Mammary epithelial cell (primary cell): ENCODE measurements at regions of chr12 and their contacts with region 1.

Region 1: GRCh38 chr12:94980577-94980976 is 22.9 kb downstream of the NDUFA12 start:
- DNase-seq: no peak
- H3K4me3 ChIP-seq: no peak overlapping the region
- H3K27ac ChIP-seq: no peak overlapping the region
- H3K4me1 ChIP-seq: peaks cover 13% of the 10 kb centered on the region
- H3K27me3 ChIP-seq: no peaks in the 10 kb centered on the region
- CTCF ChIP-seq: peak; percentile 1 to 10

Region 2: DNA sequence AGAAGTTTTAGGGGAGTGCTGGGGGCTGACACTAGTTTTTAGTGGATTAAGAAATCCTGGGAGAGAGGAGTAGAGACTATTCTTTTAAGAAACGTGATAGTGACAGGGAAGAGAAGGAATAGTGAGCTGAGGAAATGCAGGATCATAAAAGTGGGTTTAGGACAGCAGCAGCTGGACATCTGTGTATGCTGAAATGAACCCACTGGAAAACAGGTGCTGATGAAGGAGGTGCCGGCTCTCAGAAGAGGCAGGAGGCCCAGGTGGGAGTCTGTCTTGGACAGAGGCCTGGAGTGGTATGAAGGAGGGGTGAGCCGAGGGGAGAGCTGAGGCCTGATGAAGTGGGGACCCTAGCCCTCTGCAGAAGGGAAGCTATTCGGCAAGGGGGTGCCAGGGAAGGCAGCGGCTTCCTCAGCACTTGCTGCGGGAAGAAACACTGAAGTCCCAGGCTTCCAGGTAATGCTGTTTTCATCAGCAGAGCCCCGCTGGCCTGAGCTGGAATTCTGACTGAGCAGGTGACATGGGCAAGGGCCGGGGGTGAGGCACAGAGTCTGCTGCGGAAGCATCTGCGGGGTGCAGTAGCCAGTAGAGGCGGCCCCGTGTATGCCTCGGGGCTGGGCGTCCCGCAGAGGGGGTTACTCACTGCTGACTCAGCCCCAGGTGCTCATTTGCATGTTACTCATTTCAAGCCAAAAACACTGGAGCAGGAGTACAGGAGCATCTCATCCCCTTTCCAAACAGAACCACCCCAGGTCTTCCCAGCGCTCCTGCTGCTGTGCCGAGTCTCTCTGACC is 420.0 kb before region 1 on chr12:
- CTCF ChIA-PET with region 1: no interaction called
- dilution Hi-C with region 1: no loop called
- in situ Hi-C with region 1: no loop called
- intact Hi-C with region 1: loop called (anchors 5 kb)
- DNase-seq: peak; percentile 98
- H3K4me3 ChIP-seq: peak overlapping the region in 2 of 3 experiments; percentile 20 to 35
- H3K27ac ChIP-seq: peak overlapping the region; percentile 95
- H3K4me1 ChIP-seq: peaks cover 34% of the 10 kb centered on the region
- H3K27me3 ChIP-seq: no peaks in the 10 kb centered on the region
- CTCF ChIP-seq: no peak

Region 3: GRCh38 chr12:94649349-94650142 is 331.0 kb before region 1 on chr12:
- CTCF ChIA-PET with region 1: no interaction called
- dilution Hi-C with region 1: no loop called
- in situ Hi-C with region 1: no loop called
- intact Hi-C with region 1: loop called (anchors 10 kb)
- DNase-seq: peak; percentile 51
- H3K4me3 ChIP-seq: peak overlapping the region; percentile 73 to 92 (median 82)
- H3K27ac ChIP-seq: peak overlapping the region; percentile 63
- H3K4me1 ChIP-seq: peaks cover 27% of the 10 kb centered on the region
- H3K27me3 ChIP-seq: no peaks in the 10 kb centered on the region
- CTCF ChIP-seq: peak; percentile 19 to 53

Region 4: DNA sequence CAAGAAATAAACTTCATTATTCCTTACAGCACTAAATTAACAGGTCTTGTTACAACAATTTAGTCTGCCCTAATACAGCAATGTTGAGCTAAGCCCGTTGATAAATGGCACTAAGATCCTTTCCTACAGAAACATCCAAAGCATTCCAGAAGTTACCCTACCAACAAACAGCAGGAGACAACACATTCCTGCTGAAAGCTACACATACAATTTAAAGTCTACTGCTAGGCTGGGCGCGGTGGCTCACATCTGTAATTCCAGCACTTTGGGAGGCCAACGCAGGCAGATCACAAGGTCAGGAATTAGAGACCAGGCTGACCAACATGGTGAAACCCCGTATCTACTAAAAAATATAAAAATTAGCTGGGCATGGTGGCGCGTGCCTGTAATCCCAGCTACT is 45.9 kb before region 1 on chr12:
- CTCF ChIA-PET with region 1: no interaction called
- dilution Hi-C with region 1: no loop called
- in situ Hi-C with region 1: no loop called
- intact Hi-C with region 1: no loop called
- DNase-seq: no peak
- H3K4me3 ChIP-seq: no peak overlapping the region
- H3K27ac ChIP-seq: no peak overlapping the region
- H3K4me1 ChIP-seq: no peaks in the 10 kb centered on the region
- H3K27me3 ChIP-seq: no peaks in the 10 kb centered on the region
- CTCF ChIP-seq: no peak

Region 5: GRCh38 chr12:94962670-94963069 is 17.9 kb before region 1 on chr12:
- CTCF ChIA-PET with region 1: no interaction called
- dilution Hi-C with region 1: no loop called
- in situ Hi-C with region 1: no loop called
- intact Hi-C with region 1: no loop called
- DNase-seq: no peak
- H3K4me3 ChIP-seq: no peak overlapping the region
- H3K27ac ChIP-seq: no peak overlapping the region
- H3K4me1 ChIP-seq: no peaks in the 10 kb centered on the region
- H3K27me3 ChIP-seq: no peaks in the 10 kb centered on the region
- CTCF ChIP-seq: no peak

Region 6: DNA sequence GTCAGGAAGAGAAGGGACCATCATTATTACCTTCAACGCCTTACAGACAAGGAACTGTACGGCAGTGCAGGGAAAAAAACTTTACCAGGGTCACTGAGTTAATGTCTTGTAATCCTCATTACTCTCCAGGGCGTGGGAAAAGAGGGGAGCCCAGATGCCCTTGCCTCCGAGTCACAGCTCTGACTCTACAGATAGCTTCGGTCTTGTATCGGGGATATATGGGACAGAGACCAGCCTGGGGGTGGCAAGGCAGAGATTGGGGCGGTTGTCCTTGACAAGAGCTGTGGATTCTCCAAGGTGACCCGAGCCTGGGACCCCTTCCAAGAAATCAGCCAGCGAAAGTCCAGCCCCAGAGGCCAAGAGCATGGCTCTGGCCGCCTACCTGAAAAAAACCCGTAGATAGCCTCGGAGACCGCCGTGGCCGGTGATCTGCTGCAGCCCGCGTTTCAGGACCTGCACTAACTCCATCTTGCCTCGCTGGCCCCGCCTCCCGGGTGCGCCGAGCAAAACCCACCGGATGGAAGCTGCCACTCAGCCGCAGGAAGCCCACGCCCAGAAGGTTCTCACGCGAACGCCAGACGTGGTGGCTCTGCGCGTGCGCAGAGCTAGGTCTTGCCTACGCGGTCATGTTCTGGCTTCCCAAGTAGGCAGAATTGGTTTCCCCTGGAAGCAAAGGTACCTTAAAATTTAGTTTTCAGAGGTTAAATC is 22.8 kb after region 1 on chr12 and contains the start of gene NDUFA12:
- CTCF ChIA-PET with region 1: no interaction called
- dilution Hi-C with region 1: no loop called
- in situ Hi-C with region 1: no loop called
- intact Hi-C with region 1: loop called (anchors 2 kb)
- DNase-seq: peak; percentile 94
- H3K4me3 ChIP-seq: peak within 1 kb of the TSS; percentile 58 to 85 (median 84)
- H3K27ac ChIP-seq: peak within 1 kb of the TSS; percentile 86
- H3K4me1 ChIP-seq: no peaks in the 10 kb centered on the region
- H3K27me3 ChIP-seq: no peaks in the 10 kb centered on the region
- CTCF ChIP-seq: no peak
- total RNA-seq, gene NDUFA12: 64.0 to 115 TPM

Region 7: DNA sequence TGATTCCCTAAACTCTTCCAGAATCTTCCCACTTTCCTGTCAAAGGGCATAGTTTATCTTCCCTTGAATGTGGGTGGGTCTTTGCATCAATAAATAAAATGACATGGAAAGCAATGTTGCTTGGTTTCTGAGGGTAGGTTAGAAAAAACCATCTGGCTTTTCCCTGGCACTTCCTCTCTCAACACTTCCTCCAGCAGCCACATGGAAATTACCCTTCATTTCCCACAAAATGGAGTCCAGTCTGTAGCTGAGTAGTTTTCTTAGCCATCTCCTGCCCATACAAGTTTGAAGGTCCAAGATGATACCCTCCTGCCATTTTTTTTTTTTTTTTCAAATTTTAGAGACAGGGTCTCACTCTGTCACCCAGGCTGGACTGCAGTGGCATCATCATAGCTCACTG is 34.0 kb after region 1 on chr12:
- CTCF ChIA-PET with region 1: interaction called, 12 read pairs
- dilution Hi-C with region 1: no loop called
- in situ Hi-C with region 1: no loop called
- intact Hi-C with region 1: no loop called
- DNase-seq: no peak
- H3K4me3 ChIP-seq: no peak overlapping the region
- H3K27ac ChIP-seq: no peak overlapping the region
- H3K4me1 ChIP-seq: no peaks in the 10 kb centered on the region
- H3K27me3 ChIP-seq: no peaks in the 10 kb centered on the region
- CTCF ChIP-seq: no peak

Region 8: GRCh38 chr12:95037906-95038305 is 57.3 kb after region 1 on chr12:
- CTCF ChIA-PET with region 1: interaction called, 34 read pairs
- dilution Hi-C with region 1: no loop called
- in situ Hi-C with region 1: no loop called
- intact Hi-C with region 1: no loop called
- DNase-seq: no peak
- H3K4me3 ChIP-seq: no peak overlapping the region
- H3K27ac ChIP-seq: no peak overlapping the region
- H3K4me1 ChIP-seq: no peaks in the 10 kb centered on the region
- H3K27me3 ChIP-seq: no peaks in the 10 kb centered on the region
- CTCF ChIP-seq: no peak

Region 9: GRCh38 chr12:95072900-95073697 is 92.5 kb after region 1 on chr12 and contains the start of gene NR2C1:
- CTCF ChIA-PET with region 1: no interaction called
- dilution Hi-C with region 1: no loop called
- in situ Hi-C with region 1: no loop called
- intact Hi-C with region 1: loop called (anchors 2 kb)
- DNase-seq: peak; percentile 87
- H3K4me3 ChIP-seq: peak within 1 kb of the TSS; percentile 90 to 94 (median 92)
- H3K27ac ChIP-seq: peak within 1 kb of the TSS; percentile 84
- H3K4me1 ChIP-seq: peaks cover 5% of the 10 kb centered on the region
- H3K27me3 ChIP-seq: no peaks in the 10 kb centered on the region
- CTCF ChIP-seq: no peak
- total RNA-seq, gene NR2C1: 23.2 to 32.8 TPM